GM13976 (cell line): ENCODE measurements at regions of chr2 and their contacts with region 1.

Region 1: GRCh38 chr2:224284134-224284946 is 117.6 kb downstream of the FAM124B start:
- DNase-seq: peak; percentile 25
- CTCF ChIP-seq: peak; percentile 14

Region 2: GRCh38 chr2:223993621-223994232 is 290.6 kb before region 1 on chr2:
- in situ Hi-C with region 1: loop called (anchors 10 kb)
- DNase-seq: peak; percentile 71
- CTCF ChIP-seq: peak; percentile 75

Region 3: GRCh38 chr2:224412141-224413015 is 128.0 kb after region 1 on chr2:
- in situ Hi-C with region 1: no loop called
- DNase-seq: no peak
- CTCF ChIP-seq: no peak

Region 4: DNA sequence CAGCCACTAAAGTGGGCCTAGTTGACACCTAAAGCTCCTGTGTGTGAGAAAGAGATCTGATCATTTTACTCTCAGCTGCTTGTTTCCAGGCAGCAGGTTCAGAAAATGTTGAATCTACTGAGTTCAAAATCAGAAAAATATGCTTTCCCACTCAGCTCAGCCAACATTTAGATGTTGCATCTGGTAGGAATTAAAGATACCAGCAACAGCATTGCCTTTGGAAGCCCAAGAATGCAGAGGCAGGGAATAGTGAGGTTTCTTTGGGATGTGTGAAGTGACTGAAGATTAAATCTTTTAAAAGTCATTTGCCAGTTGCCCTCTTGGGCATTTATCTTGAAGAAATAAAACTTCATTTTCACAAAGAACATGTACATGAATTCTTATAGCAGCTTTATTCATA is 791.8 kb after region 1 on chr2:
- in situ Hi-C with region 1: no loop called
- DNase-seq: no peak
- CTCF ChIP-seq: no peak